OCI-LY7 (cell line): ENCODE measurements at regions of chr18 and their contacts with region 1.

Region 1: DNA sequence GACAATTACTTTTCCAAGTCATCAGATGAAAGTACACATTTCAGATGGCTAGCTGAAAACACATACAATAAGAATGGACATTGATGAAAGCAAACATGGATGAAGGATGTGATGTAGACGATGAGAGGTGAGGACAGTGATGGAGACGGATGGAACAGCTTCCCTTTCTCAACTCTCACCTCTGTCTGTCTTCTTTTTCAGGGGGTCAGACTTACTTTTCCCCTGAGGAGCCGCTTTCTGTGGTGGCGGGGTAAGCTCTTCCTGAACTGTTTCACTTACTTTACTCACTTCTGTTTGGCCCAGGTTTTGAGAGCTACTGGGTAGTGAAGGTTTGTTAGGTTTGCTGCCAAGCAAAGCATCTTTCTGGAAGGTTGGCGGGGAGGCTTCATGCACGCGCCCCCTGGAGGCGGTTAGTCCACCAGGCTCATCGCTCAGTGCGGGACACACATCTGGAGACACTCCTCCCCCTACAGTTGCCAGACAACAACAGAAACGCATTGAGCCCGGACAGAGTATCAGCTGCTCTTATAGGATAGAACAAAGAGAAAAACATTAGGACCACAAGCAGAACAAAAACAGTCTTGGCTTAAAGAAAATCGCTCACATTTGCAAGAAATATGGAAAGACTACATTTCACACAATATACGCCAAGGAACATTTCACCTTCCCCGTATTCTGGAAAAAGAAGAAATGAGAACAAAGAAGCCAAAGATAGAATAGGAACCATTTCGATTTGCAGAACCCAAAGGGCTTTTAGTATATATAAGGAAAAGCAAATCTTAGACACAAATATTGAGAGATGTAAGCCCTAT is 90.5 kb downstream of the MYOM1 start:
- DNase-seq: peak; percentile 90
- H3K4me3 ChIP-seq: peak overlapping the region; percentile 6
- H3K27ac ChIP-seq: no peak overlapping the region
- H3K4me1 ChIP-seq: peaks cover 10% of the 10 kb centered on the region
- CTCF ChIP-seq: peak; percentile 99

Region 2: DNA sequence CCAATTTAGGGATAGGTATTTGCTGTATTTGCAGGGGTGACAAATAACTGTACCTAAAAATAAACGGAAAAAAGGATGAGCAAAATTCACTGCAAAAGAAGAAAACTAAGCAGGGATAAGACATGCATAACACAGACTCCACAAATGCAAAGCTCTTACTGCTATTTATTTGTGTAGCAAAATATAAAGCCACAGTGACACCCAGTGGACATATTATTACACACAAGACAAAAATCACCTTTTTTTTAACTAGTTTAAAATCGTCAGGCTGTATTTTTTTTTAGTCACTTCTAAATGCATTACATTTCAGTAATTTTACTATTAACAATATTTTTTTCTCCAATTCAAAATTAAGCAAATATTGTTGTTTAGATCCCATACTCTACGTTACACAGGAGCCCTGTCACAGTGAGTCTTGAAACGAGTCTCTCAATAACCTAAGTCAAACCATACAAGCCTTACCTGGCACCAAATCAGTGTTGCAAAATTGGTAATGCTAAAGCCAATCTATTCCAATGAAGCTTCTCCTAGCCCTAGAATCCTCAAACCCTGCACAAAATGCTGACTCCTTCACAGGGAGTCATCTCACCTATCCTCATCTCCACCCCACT is 581.7 kb before region 1 on chr18:
- CTCF ChIA-PET with region 1: no interaction called
- POLR2A ChIA-PET with region 1: no interaction called
- intact Hi-C with region 1: no loop called
- DNase-seq: peak; percentile 80
- H3K4me3 ChIP-seq: no peak overlapping the region
- H3K27ac ChIP-seq: no peak overlapping the region
- H3K4me1 ChIP-seq: peaks cover 12% of the 10 kb centered on the region
- CTCF ChIP-seq: peak; percentile 94

Region 3: GRCh38 chr18:2826581-2826980 is 302.7 kb before region 1 on chr18:
- CTCF ChIA-PET with region 1: no interaction called
- POLR2A ChIA-PET with region 1: no interaction called
- intact Hi-C with region 1: no loop called
- DNase-seq: no peak
- H3K4me3 ChIP-seq: no peak overlapping the region
- H3K27ac ChIP-seq: no peak overlapping the region
- H3K4me1 ChIP-seq: no peaks in the 10 kb centered on the region
- CTCF ChIP-seq: no peak

Region 4: GRCh38 chr18:3012964-3013804 is 116.1 kb before region 1 on chr18 and contains the start of gene LPIN2:
- CTCF ChIA-PET with region 1: no interaction called
- POLR2A ChIA-PET with region 1: no interaction called
- intact Hi-C with region 1: loop called (anchors 2 kb)
- DNase-seq: peak; percentile 98
- H3K4me3 ChIP-seq: peak within 1 kb of the TSS; percentile 72
- H3K27ac ChIP-seq: peak within 1 kb of the TSS; percentile 50
- H3K4me1 ChIP-seq: peaks cover 51% of the 10 kb centered on the region
- CTCF ChIP-seq: no peak
- total RNA-seq, gene LPIN2: 18.7 and 20.1 TPM in 2 replicates

Region 5: GRCh38 chr18:3388982-3389381 is 259.7 kb after region 1 on chr18:
- CTCF ChIA-PET with region 1: no interaction called
- POLR2A ChIA-PET with region 1: no interaction called
- intact Hi-C with region 1: no loop called
- DNase-seq: no peak
- H3K4me3 ChIP-seq: no peak overlapping the region
- H3K27ac ChIP-seq: no peak overlapping the region
- H3K4me1 ChIP-seq: peaks cover 8% of the 10 kb centered on the region
- CTCF ChIP-seq: no peak

Region 6: GRCh38 chr18:3508576-3509549 is 379.6 kb after region 1 on chr18:
- CTCF ChIA-PET with region 1: no interaction called
- POLR2A ChIA-PET with region 1: no interaction called
- intact Hi-C with region 1: no loop called
- DNase-seq: no peak
- H3K4me3 ChIP-seq: no peak overlapping the region
- H3K27ac ChIP-seq: no peak overlapping the region
- H3K4me1 ChIP-seq: peaks cover 7% of the 10 kb centered on the region
- CTCF ChIP-seq: no peak